ENCODE measurements at regions of chr7 and their contacts with region 1.

Region 1: GRCh38 chr7:116258734-116259133 is 48.4 kb downstream of the TES start:
- DNase-seq: peak in 4 of 9 experiments; percentile 24 to 69 (median 46)
- ATAC-seq: peak; percentile 61
- H3K4me3 ChIP-seq: no peak overlapping the region
- H3K4me3 Mint-ChIP-seq: no peak overlapping the region
- H3K27ac ChIP-seq: peak overlapping the region in 1 of 2 experiments; percentile 1
- H3K27ac Mint-ChIP-seq: no peak overlapping the region
- H3K4me1 ChIP-seq: no peaks in the 10 kb centered on the region
- H3K4me1 Mint-ChIP-seq: peaks cover 10% of the 10 kb centered on the region
- H3K27me3 ChIP-seq: no peaks in the 10 kb centered on the region
- H3K27me3 Mint-ChIP-seq: no peaks in the 10 kb centered on the region
- CTCF ChIP-seq: peak; percentile 89

Region 2: GRCh38 chr7:116041615-116042014 is 217.1 kb before region 1 on chr7:
- CTCF ChIA-PET with region 1: no interaction called
- POLR2A ChIA-PET with region 1: no interaction called
- intact Hi-C with region 1: no loop called
- DNase-seq: no peak
- ATAC-seq: no peak
- H3K4me3 ChIP-seq: no peak overlapping the region
- H3K4me3 Mint-ChIP-seq: no peak overlapping the region
- H3K27ac ChIP-seq: no peak overlapping the region
- H3K27ac Mint-ChIP-seq: no peak overlapping the region
- H3K4me1 ChIP-seq: no peaks in the 10 kb centered on the region
- H3K4me1 Mint-ChIP-seq: no peaks in the 10 kb centered on the region
- H3K27me3 ChIP-seq: no peaks in the 10 kb centered on the region
- H3K27me3 Mint-ChIP-seq: peaks cover 3% of the 10 kb centered on the region
- CTCF ChIP-seq: no peak

Region 3: DNA sequence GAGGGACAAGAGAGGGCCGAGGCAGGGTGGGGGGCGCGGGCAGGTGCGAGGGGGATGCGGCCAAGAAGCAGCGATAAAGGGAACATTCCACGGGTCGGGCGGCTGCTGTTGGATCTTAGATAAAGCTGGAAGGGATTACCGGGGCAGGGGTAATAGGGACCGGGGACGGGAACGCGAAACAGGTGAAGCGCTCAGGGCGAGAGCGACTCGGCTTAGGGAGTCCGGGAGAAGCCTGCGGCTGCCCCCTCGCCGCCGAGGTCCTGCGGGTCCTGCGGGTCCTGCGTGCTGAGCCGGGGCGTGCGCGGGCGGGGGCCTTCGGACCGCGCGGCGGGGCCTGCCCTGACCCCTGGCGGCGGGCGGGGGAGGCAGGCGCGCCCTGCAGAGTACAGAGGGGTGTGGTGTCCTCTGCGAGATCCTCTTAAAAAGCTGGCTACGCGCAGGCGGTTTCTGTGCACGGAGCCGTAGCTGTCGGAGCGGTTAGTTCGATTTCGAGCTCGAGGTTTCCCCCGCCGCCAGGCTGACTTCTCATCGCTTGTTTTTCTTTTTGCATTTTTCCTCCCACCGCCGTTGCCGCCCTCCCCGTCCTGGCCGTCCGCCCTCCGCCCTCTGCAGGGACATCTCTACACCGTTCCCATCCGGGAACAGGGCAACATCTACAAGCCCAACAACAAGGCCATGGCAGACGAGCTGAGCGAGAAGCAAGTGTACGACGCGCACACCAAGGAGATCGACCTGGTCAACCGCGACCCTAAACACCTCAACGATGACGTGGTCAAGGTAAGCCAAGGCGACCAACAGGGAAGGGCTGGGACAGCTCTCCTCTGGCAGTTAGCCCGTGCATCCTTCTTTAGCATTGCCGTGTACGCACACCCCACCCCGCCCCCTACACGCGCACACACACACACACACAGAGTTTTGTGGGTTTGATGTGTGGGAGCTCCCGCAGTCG is 267.5 kb after region 1 on chr7:
- CTCF ChIA-PET with region 1: interaction called, 23 read pairs
- POLR2A ChIA-PET with region 1: no interaction called
- intact Hi-C with region 1: loop called (anchors 1 kb)
- DNase-seq: peak; percentile 19 to 80 (median 59)
- ATAC-seq: peak; percentile 92
- H3K4me3 ChIP-seq: peak overlapping the region; percentile 59 to 67
- H3K4me3 Mint-ChIP-seq: peak overlapping the region; percentile 83
- H3K27ac ChIP-seq: no peak overlapping the region
- H3K27ac Mint-ChIP-seq: no peak overlapping the region
- H3K4me1 ChIP-seq: peaks cover 21% of the 10 kb centered on the region
- H3K4me1 Mint-ChIP-seq: peaks cover 25% of the 10 kb centered on the region
- H3K27me3 ChIP-seq: peaks cover 15 to 31% of the 10 kb centered on the region in 2 experiments
- H3K27me3 Mint-ChIP-seq: peaks cover 60% of the 10 kb centered on the region
- CTCF ChIP-seq: peak; percentile 59

Region 4: DNA sequence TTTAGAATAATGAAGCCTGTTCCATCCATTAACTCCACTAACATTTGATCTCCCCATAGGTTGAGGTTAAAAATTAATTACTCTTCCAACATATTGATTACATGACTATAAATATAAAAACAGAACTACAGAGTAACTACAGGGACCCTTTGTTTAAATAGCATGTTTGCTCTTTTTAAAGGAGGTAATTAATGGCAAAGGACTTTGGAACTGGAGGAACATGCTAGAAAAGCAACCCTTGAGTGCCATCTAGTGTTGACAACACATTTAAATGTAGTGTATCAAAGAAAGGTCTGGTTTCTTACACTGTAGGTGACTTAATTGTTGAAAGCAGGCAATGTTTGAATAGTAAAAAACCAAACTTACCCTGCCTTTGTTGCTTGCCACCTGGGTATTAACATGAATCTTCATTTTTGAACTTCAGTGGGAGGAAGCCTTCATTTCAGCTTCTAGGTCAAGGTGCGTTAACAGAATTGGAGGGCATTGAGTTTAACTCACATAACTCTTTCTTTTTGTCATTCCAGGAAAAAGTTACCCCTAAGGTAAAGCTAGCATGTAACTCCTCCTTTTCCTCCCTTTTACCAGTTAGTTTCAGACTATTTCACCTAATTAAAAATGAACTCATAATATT is 551.0 kb after region 1 on chr7:
- CTCF ChIA-PET with region 1: interaction called, 5 read pairs
- POLR2A ChIA-PET with region 1: no interaction called
- intact Hi-C with region 1: loop called (anchors 1 to 2 kb)
- DNase-seq: peak in 2 of 9 experiments; percentile 52 to 60
- ATAC-seq: no peak
- H3K4me3 ChIP-seq: no peak overlapping the region
- H3K4me3 Mint-ChIP-seq: no peak overlapping the region
- H3K27ac ChIP-seq: no peak overlapping the region
- H3K27ac Mint-ChIP-seq: no peak overlapping the region
- H3K4me1 ChIP-seq: no peaks in the 10 kb centered on the region
- H3K4me1 Mint-ChIP-seq: no peaks in the 10 kb centered on the region
- H3K27me3 ChIP-seq: no peaks in the 10 kb centered on the region
- H3K27me3 Mint-ChIP-seq: peaks cover 6% of the 10 kb centered on the region
- CTCF ChIP-seq: peak; percentile 58

Region 5: DNA sequence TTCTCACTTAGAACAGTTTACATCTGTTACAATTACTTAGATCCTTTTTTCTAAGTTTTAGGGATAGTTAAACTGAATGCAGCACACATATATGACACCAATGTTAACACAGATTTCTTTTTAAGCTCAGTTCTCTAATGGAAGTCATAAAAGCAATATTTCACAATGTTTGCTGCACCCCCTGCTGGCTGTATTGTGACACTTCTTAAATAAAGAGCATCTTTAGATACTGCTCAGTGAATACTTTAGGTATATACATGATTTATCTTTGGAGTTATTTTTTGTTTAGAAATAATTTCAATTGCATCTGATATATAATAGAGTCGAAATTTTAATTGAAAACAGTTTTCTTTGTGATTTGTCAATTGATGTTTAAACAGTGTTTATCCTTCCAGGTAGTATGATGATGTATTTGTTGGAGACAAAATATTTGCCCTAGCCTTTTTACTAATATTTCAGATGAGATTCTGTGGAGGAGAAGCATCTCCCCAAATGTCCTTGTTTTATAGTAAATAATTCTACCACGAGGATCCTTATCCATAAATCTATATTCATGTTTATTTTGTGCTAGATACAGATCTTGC is 868.9 kb after region 1 on chr7:
- CTCF ChIA-PET with region 1: no interaction called
- POLR2A ChIA-PET with region 1: no interaction called
- intact Hi-C with region 1: loop called in 1 of 2 experiments (anchors 10 kb)
- DNase-seq: peak in 8 of 9 experiments; percentile 20 to 69 (median 51)
- ATAC-seq: peak; percentile 73
- H3K4me3 ChIP-seq: no peak overlapping the region
- H3K4me3 Mint-ChIP-seq: no peak overlapping the region
- H3K27ac ChIP-seq: no peak overlapping the region
- H3K27ac Mint-ChIP-seq: no peak overlapping the region
- H3K4me1 ChIP-seq: no peaks in the 10 kb centered on the region
- H3K4me1 Mint-ChIP-seq: peaks cover 3% of the 10 kb centered on the region
- H3K27me3 ChIP-seq: no peaks in the 10 kb centered on the region
- H3K27me3 Mint-ChIP-seq: no peaks in the 10 kb centered on the region
- CTCF ChIP-seq: peak; percentile 92